PC-9 (cell line): ENCODE measurements at regions of chr19 and their contacts with region 1.

Region 1: GRCh38 chr19:40598121-40598917 is 2.9 kb upstream of the LTBP4 start:
- DNase-seq: peak; percentile 60 to 89
- H3K4me3 ChIP-seq: no peak overlapping the region
- H3K27ac ChIP-seq: no peak overlapping the region
- H3K4me1 ChIP-seq: peaks cover 32% of the 10 kb centered on the region
- H3K27me3 ChIP-seq: peaks cover 35% of the 10 kb centered on the region
- CTCF ChIP-seq: peak; percentile 96

Region 2: DNA sequence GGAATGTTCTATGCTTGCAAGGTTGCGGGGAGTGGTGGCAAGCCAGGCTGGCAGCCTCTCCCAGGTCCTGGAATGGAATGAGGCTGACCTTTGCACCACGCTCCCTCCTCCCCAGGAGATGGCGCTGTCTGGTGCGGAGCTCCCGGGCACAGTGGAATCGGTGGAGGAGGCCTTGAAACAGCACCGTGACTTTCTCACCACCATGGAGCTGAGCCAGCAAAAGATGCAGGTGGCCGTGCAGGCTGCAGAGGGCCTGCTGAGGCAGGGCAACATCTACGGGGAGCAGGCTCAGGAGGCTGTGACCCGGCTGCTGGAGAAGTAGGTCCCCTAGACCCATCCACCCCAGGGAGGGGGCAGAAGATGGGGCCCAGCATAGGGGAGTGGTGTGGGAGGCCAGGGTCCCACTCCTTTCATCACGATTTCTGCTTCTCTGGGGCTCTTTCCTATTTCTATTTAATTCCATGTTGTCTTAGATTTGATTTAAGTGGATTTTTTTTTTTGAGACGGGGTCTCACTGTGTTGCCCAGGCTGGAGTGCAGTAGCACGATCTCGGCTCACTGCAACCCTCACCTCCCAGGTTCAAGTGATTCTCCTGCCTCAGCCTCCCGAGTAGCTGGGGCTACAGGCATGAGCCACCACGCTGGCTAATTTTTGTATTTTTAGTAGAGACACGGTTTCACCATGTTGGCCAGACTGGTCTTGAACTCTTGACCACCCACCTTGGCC is 74.8 kb before region 1 on chr19:
- CTCF ChIA-PET with region 1: interaction called, 3 read pairs
- POLR2A ChIA-PET with region 1: no interaction called
- intact Hi-C with region 1: loop called (anchors 2 kb)
- DNase-seq: peak; percentile 61 to 75
- H3K4me3 ChIP-seq: no peak overlapping the region
- H3K27ac ChIP-seq: no peak overlapping the region
- H3K4me1 ChIP-seq: no peaks in the 10 kb centered on the region
- H3K27me3 ChIP-seq: peaks cover 4% of the 10 kb centered on the region; the same call in 1 of the 2 replicates
- CTCF ChIP-seq: peak; percentile 70

Region 3: GRCh38 chr19:40674291-40674690 is 76.0 kb after region 1 on chr19:
- CTCF ChIA-PET with region 1: no interaction called
- POLR2A ChIA-PET with region 1: no interaction called
- intact Hi-C with region 1: no loop called
- DNase-seq: peak in 1 of 2 experiments; percentile 45
- H3K4me3 ChIP-seq: no peak overlapping the region
- H3K27ac ChIP-seq: no peak overlapping the region
- H3K4me1 ChIP-seq: no peaks in the 10 kb centered on the region
- H3K27me3 ChIP-seq: no peaks in the 10 kb centered on the region
- CTCF ChIP-seq: no peak

Region 4: GRCh38 chr19:40808497-40808896 is 210.2 kb after region 1 on chr19:
- CTCF ChIA-PET with region 1: no interaction called
- POLR2A ChIA-PET with region 1: no interaction called
- intact Hi-C with region 1: no loop called
- DNase-seq: no peak
- H3K4me3 ChIP-seq: no peak overlapping the region
- H3K27ac ChIP-seq: no peak overlapping the region
- H3K4me1 ChIP-seq: peaks cover 4% of the 10 kb centered on the region; the same call in 1 of the 2 replicates
- H3K27me3 ChIP-seq: no peaks in the 10 kb centered on the region
- CTCF ChIP-seq: no peak